Adrenal gland (tissue), 19 donors: ENCODE measurements at regions of chr11 and their contacts with region 1.

Region 1: GRCh38 chr11:2590965-2591754 is 108.6 kb downstream of the KCNQ1OT1 start:
- DNase-seq: peak in 3 of 7 donors; percentile 15 to 45 (median 21)
- H3K4me3 ChIP-seq: no peak overlapping the region
- H3K27ac ChIP-seq: no peak overlapping the region
- H3K4me1 ChIP-seq: no peaks in the 10 kb centered on the region
- H3K27me3 ChIP-seq: no peaks in the 10 kb centered on the region
- CTCF ChIP-seq: no peak
- POLR2A ChIP-seq: no peak

Region 2: GRCh38 chr11:2666401-2666741 is 75.2 kb after region 1 on chr11:
- intact Hi-C with region 1: loop called in 1 of 2 experiments (anchors 5 kb)
- DNase-seq: peak; percentile 62 to 78 (median 64)
- H3K4me3 ChIP-seq: no peak overlapping the region
- H3K27ac ChIP-seq: peak overlapping the region in 4 of 5 donors; percentile 32 to 85 (median 59)
- H3K4me1 ChIP-seq: peaks cover 0 to 52% of the 10 kb centered on the region in 2 donors
- H3K27me3 ChIP-seq: no peaks in the 10 kb centered on the region
- CTCF ChIP-seq: no peak
- POLR2A ChIP-seq: no peak